Transverse colon (tissue), 4 donors: ENCODE measurements at regions of chr9 and their contacts with region 1.

Region 1: GRCh38 chr9:70043689-70044489 is at the start of gene MAMDC2:
- DNase-seq: peak; percentile 42
- H3K4me3 ChIP-seq: peak within 1 kb of the TSS; percentile 47 to 64 (median 49)
- H3K27ac ChIP-seq: peak within 1 kb of the TSS; percentile 83 to 92 (median 88)
- H3K4me1 ChIP-seq: peaks cover 4 to 33% (median 9%) of the 10 kb centered on the region in 4 donors
- H3K27me3 ChIP-seq: peaks cover 21% of the 10 kb centered on the region
- CTCF ChIP-seq: no peak
- EP300 ChIP-seq: no peak
- POLR2A ChIP-seq: peak; percentile 65
- total RNA-seq, gene MAMDC2: 7.4 to 40.5 (median 28.9) TPM

Region 2: DNA sequence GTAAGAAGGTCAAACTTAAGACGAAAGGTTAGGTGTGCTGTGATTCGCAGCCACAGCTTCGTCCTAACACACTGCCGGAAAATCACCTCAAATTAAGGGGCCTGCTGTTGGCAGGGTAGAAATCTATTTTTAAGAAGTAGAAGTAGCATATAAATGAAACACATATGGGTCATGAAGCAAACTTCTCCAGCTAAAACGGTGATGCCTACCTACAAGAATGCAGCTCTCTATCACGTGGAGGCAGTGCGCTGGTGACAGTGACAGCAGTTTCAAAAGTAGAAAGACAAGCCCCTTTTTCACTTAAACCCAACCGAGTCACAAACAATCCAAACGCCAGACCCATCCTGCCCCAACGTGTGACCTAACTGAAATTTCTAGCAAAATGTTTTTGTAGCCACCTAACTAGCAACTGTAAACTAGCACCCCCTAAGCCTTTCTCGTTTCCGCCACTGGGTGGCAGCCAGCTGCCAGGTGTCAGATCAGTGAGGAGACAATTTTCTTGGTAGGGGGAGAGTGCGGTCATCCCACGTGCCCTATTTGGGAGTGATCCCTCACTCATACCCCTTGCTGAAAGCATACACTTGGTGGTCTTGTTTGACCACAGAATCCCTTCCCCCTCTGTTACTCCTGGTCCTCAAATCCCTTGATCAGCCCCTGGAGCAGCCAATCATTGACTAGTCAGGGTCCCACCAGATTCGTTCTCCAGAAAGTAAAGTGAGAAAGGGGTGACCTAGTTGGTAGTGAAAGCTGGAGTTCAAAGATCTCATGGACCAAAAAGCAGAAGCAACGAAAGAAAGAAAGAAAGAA is 72.0 kb before region 1 on chr9:
- in situ Hi-C with region 1: no loop called
- intact Hi-C with region 1: loop called (anchors 5 kb)
- DNase-seq: peak; percentile 67
- H3K4me3 ChIP-seq: no peak overlapping the region
- H3K27ac ChIP-seq: no peak overlapping the region
- H3K4me1 ChIP-seq: no peaks in the 10 kb centered on the region
- H3K27me3 ChIP-seq: no peaks in the 10 kb centered on the region
- CTCF ChIP-seq: peak; percentile 73 to 90 (median 82)
- EP300 ChIP-seq: no peak
- POLR2A ChIP-seq: no peak

Region 3: GRCh38 chr9:70091540-70091939 is 47.7 kb after region 1 on chr9:
- in situ Hi-C with region 1: no loop called
- intact Hi-C with region 1: loop called (anchors 1 kb)
- DNase-seq: no peak
- H3K4me3 ChIP-seq: no peak overlapping the region
- H3K27ac ChIP-seq: peak overlapping the region; percentile 34 to 65 (median 50)
- H3K4me1 ChIP-seq: peaks cover 4 to 24% (median 16%) of the 10 kb centered on the region in 4 donors
- H3K27me3 ChIP-seq: no peaks in the 10 kb centered on the region
- CTCF ChIP-seq: no peak
- EP300 ChIP-seq: no peak
- POLR2A ChIP-seq: no peak

Region 4: GRCh38 chr9:70111042-70111602 is 67.2 kb after region 1 on chr9:
- in situ Hi-C with region 1: no loop called
- intact Hi-C with region 1: loop called (anchors 5 kb)
- DNase-seq: peak; percentile 81
- H3K4me3 ChIP-seq: no peak overlapping the region
- H3K27ac ChIP-seq: peak overlapping the region; percentile 9 to 72 (median 51)
- H3K4me1 ChIP-seq: peaks cover 0 to 24% (median 6%) of the 10 kb centered on the region in 4 donors
- H3K27me3 ChIP-seq: no peaks in the 10 kb centered on the region
- CTCF ChIP-seq: peak; percentile 68 to 91 (median 82)
- EP300 ChIP-seq: no peak
- POLR2A ChIP-seq: no peak

Region 5: GRCh38 chr9:70413798-70414775 is 370.2 kb after region 1 on chr9 and contains the start of gene KLF9:
- in situ Hi-C with region 1: no loop called
- intact Hi-C with region 1: loop called (anchors 10 kb)
- DNase-seq: peak; percentile 95
- H3K4me3 ChIP-seq: peak within 1 kb of the TSS; percentile 89 to 96 (median 92)
- H3K27ac ChIP-seq: peak within 1 kb of the TSS; percentile 99 to 100 (median 100)
- H3K4me1 ChIP-seq: peaks cover 21 to 59% (median 44%) of the 10 kb centered on the region in 4 donors
- H3K27me3 ChIP-seq: no peaks in the 10 kb centered on the region
- CTCF ChIP-seq: peak in 1 of 5 experiments; percentile 4
- EP300 ChIP-seq: peak; percentile 91
- POLR2A ChIP-seq: peak; percentile 99
- total RNA-seq, gene KLF9: 60.3 to 111 (median 82.9) TPM

Region 6: GRCh38 chr9:70553707-70554673 is 510.1 kb after region 1 on chr9:
- in situ Hi-C with region 1: no loop called
- intact Hi-C with region 1: loop called (anchors 2 kb)
- DNase-seq: no peak
- H3K4me3 ChIP-seq: no peak overlapping the region
- H3K27ac ChIP-seq: peak overlapping the region in 1 of 4 donors; percentile 35
- H3K4me1 ChIP-seq: peaks cover 0 to 15% (median 8%) of the 10 kb centered on the region in 4 donors
- H3K27me3 ChIP-seq: no peaks in the 10 kb centered on the region
- CTCF ChIP-seq: no peak
- EP300 ChIP-seq: no peak
- POLR2A ChIP-seq: no peak